Transverse colon (tissue), 4 donors: ENCODE measurements at regions of chr19 and their contacts with region 1.

Region 1: GRCh38 chr19:9796113-9796773 is 22.6 kb downstream of the FBXL12 start:
- DNase-seq: peak; percentile 93
- H3K4me3 ChIP-seq: no peak overlapping the region
- H3K27ac ChIP-seq: peak overlapping the region in 3 of 4 donors; percentile 25 to 52 (median 38)
- H3K4me1 ChIP-seq: peaks cover 0 to 10% (median 3%) of the 10 kb centered on the region in 4 donors
- H3K27me3 ChIP-seq: no peaks in the 10 kb centered on the region
- CTCF ChIP-seq: peak; percentile 70 to 86 (median 76)
- EP300 ChIP-seq: peak; percentile 17
- POLR2A ChIP-seq: no peak

Region 2: DNA sequence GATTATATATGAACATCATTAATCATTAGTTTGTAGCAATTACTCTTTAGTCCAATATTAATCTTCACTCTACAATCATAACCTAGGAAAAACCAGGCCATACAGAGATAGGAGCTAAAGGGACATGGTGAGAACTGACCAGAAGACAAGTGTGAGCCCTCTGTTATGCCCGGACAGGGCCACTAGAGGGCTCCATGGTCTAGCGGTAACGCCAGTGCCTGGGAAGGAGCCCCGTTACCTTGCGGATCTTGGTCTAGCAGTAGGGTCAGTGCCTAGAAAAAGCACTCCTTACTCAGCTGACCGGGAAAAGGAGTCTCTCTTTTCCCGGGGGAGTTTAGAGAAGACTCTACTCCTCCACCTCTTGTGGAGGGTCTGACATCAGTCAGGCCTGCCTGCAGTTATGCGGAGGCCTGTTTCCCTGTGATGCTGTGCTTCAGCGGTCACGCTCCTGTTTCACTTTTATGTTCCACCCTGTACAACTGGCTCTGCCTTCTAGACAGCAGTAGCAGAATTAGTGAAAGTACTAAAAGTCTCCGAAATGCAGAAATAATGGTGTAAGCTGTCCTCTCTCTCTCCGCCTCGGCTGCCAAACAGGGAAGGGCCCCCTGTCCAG is 590.6 kb before region 1 on chr19:
- in situ Hi-C with region 1: loop called in 2 of 4 experiments (anchors 10 kb)
- intact Hi-C with region 1: loop called (anchors 10 kb)
- DNase-seq: peak; percentile 72
- H3K4me3 ChIP-seq: peak overlapping the region in 1 of 4 donors; percentile 35
- H3K27ac ChIP-seq: no peak overlapping the region
- H3K4me1 ChIP-seq: peaks cover 0 to 5% (median 2%) of the 10 kb centered on the region in 4 donors
- H3K27me3 ChIP-seq: no peaks in the 10 kb centered on the region
- CTCF ChIP-seq: peak; percentile 70 to 89 (median 81)
- EP300 ChIP-seq: no peak
- POLR2A ChIP-seq: no peak

Region 3: DNA sequence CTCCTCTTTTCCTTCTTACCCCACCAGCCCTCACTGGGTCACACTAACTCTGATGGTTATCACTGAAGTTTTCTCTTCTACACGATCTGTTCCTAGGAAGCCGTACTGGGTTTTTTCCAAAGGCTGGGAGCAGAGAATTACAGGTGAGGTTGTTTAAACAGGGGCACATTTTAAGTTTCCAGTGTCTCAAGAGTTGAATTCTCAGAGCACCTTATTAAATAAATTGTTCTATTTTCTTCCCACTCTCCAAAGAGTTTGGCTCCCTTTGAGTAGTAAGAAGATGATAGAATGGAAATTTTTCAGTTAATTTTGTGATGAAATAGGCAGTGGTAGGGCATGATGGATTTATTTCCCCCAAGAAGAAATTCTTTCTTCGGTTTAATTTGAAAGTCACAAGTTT is 576.8 kb before region 1 on chr19 and contains the start of gene OR7D4:
- in situ Hi-C with region 1: no loop called
- intact Hi-C with region 1: loop called (anchors 10 kb)
- DNase-seq: no peak
- H3K4me3 ChIP-seq: no peak within 1 kb of the TSS
- H3K27ac ChIP-seq: no peak within 1 kb of the TSS
- H3K4me1 ChIP-seq: no peaks in the 10 kb centered on the region
- H3K27me3 ChIP-seq: no peaks in the 10 kb centered on the region
- CTCF ChIP-seq: no peak
- EP300 ChIP-seq: no peak
- POLR2A ChIP-seq: no peak
- total RNA-seq, gene OR7D4: not detected

Region 4: GRCh38 chr19:9309974-9310446 is 486.2 kb before region 1 on chr19:
- in situ Hi-C with region 1: loop called in 3 of 4 experiments (anchors 25 kb)
- intact Hi-C with region 1: loop called (anchors 10 kb)
- DNase-seq: peak; percentile 91
- H3K4me3 ChIP-seq: peak overlapping the region; percentile 75 to 87 (median 82)
- H3K27ac ChIP-seq: peak overlapping the region; percentile 92 to 98 (median 95)
- H3K4me1 ChIP-seq: peaks cover 0 to 15% (median 7%) of the 10 kb centered on the region in 4 donors
- H3K27me3 ChIP-seq: no peaks in the 10 kb centered on the region
- CTCF ChIP-seq: peak in 1 of 5 experiments; percentile 15
- EP300 ChIP-seq: no peak
- POLR2A ChIP-seq: no peak

Region 5: GRCh38 chr19:9621156-9622037 is 174.8 kb before region 1 on chr19 and contains the start of gene ZNF561:
- in situ Hi-C with region 1: loop called (anchors 5 to 10 kb)
- intact Hi-C with region 1: no loop called
- DNase-seq: peak; percentile 90
- H3K4me3 ChIP-seq: peak within 1 kb of the TSS; percentile 71 to 91 (median 80)
- H3K27ac ChIP-seq: peak within 1 kb of the TSS; percentile 89 to 93 (median 92)
- H3K4me1 ChIP-seq: peaks cover 5 to 25% (median 16%) of the 10 kb centered on the region in 4 donors
- H3K27me3 ChIP-seq: no peaks in the 10 kb centered on the region
- CTCF ChIP-seq: no peak
- EP300 ChIP-seq: no peak
- POLR2A ChIP-seq: peak; percentile 38
- total RNA-seq, gene ZNF561: 6.4 to 36.7 (median 26.0) TPM

Region 6: GRCh38 chr19:9627856-9628255 is 168.4 kb before region 1 on chr19:
- in situ Hi-C with region 1: loop called (anchors 5 to 10 kb)
- intact Hi-C with region 1: no loop called
- DNase-seq: no peak
- H3K4me3 ChIP-seq: no peak overlapping the region
- H3K27ac ChIP-seq: no peak overlapping the region
- H3K4me1 ChIP-seq: peaks cover 0 to 3% (median under 1%) of the 10 kb centered on the region in 4 donors
- H3K27me3 ChIP-seq: no peaks in the 10 kb centered on the region
- CTCF ChIP-seq: no peak
- EP300 ChIP-seq: no peak
- POLR2A ChIP-seq: no peak